CD14-positive monocyte (primary cell): ENCODE measurements at regions of chr5 and their contacts with region 1.

Region 1: DNA sequence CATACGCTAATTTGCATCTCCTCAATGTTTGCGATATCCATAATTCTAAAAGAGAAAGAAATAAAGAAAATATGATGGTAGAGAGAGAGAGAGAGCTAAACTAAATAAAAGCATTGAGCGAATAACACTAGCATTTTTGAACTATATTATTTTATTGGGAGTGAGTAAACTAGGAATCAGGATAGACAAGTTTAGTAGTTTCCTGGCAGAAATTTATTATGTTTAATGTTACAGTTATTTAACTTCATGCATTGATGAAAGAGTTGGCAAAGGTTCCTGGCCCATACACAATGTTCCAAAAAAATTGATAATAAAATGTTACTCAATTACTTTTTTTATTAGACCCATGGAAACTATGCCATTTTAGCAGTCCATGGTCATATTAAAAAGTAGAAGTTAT is 1708.2 kb upstream of the CDH6 start:
- DNase-seq: no peak
- H3K4me3 ChIP-seq: no peak overlapping the region
- H3K4me3 Mint-ChIP-seq: no peak overlapping the region
- H3K27ac ChIP-seq: no peak overlapping the region
- H3K27ac Mint-ChIP-seq: no peak overlapping the region
- H3K4me1 ChIP-seq: no peaks in the 10 kb centered on the region
- H3K4me1 Mint-ChIP-seq: no peaks in the 10 kb centered on the region
- H3K27me3 ChIP-seq: no peaks in the 10 kb centered on the region
- H3K27me3 Mint-ChIP-seq: peaks cover 0 to 2% (median 0%) of the 10 kb centered on the region in 3 donors
- CTCF ChIP-seq: no peak

Region 2: DNA sequence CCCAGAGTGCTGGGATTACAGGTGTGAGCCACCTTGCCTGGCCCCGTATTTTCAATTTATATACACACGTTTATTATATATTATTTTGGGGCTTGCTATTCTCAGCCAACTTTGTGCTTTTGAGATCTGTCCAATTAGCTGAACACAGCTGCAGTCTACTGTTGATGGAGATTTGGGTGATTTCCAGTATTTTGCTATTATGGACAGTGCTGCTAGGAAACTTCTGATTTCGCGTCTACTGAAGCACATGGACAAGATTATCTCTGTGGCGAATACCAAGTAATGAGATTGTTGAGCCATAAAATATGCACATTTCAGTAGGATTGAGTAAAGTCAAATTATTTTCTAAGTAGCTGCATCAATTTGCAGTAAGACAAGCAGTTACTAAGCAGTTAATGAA is 23.1 kb before region 1 on chr5:
- intact Hi-C with region 1: no loop called
- DNase-seq: no peak
- H3K4me3 ChIP-seq: no peak overlapping the region
- H3K4me3 Mint-ChIP-seq: no peak overlapping the region
- H3K27ac ChIP-seq: no peak overlapping the region
- H3K27ac Mint-ChIP-seq: no peak overlapping the region
- H3K4me1 ChIP-seq: no peaks in the 10 kb centered on the region
- H3K4me1 Mint-ChIP-seq: no peaks in the 10 kb centered on the region
- H3K27me3 ChIP-seq: no peaks in the 10 kb centered on the region
- H3K27me3 Mint-ChIP-seq: peaks cover 0 to 6% (median 0%) of the 10 kb centered on the region in 3 donors
- CTCF ChIP-seq: no peak

Region 3: GRCh38 chr5:29498412-29498811 is 13.1 kb after region 1 on chr5:
- intact Hi-C with region 1: loop called in 1 of 2 experiments (anchors 2 kb)
- DNase-seq: no peak
- H3K4me3 ChIP-seq: no peak overlapping the region
- H3K4me3 Mint-ChIP-seq: no peak overlapping the region
- H3K27ac ChIP-seq: no peak overlapping the region
- H3K27ac Mint-ChIP-seq: no peak overlapping the region
- H3K4me1 ChIP-seq: no peaks in the 10 kb centered on the region
- H3K4me1 Mint-ChIP-seq: no peaks in the 10 kb centered on the region
- H3K27me3 ChIP-seq: no peaks in the 10 kb centered on the region
- H3K27me3 Mint-ChIP-seq: no peaks in the 10 kb centered on the region
- CTCF ChIP-seq: no peak

Region 4: GRCh38 chr5:29518176-29518575 is 32.8 kb after region 1 on chr5:
- intact Hi-C with region 1: no loop called
- DNase-seq: no peak
- H3K4me3 ChIP-seq: no peak overlapping the region
- H3K4me3 Mint-ChIP-seq: no peak overlapping the region
- H3K27ac ChIP-seq: no peak overlapping the region
- H3K27ac Mint-ChIP-seq: no peak overlapping the region
- H3K4me1 ChIP-seq: no peaks in the 10 kb centered on the region
- H3K4me1 Mint-ChIP-seq: no peaks in the 10 kb centered on the region
- H3K27me3 ChIP-seq: no peaks in the 10 kb centered on the region
- H3K27me3 Mint-ChIP-seq: no peaks in the 10 kb centered on the region
- CTCF ChIP-seq: no peak